Naive thymus-derived CD8-positive, alpha-beta T cell (primary cell): ENCODE measurements at regions of chr10 and their contacts with region 1.

Region 1: DNA sequence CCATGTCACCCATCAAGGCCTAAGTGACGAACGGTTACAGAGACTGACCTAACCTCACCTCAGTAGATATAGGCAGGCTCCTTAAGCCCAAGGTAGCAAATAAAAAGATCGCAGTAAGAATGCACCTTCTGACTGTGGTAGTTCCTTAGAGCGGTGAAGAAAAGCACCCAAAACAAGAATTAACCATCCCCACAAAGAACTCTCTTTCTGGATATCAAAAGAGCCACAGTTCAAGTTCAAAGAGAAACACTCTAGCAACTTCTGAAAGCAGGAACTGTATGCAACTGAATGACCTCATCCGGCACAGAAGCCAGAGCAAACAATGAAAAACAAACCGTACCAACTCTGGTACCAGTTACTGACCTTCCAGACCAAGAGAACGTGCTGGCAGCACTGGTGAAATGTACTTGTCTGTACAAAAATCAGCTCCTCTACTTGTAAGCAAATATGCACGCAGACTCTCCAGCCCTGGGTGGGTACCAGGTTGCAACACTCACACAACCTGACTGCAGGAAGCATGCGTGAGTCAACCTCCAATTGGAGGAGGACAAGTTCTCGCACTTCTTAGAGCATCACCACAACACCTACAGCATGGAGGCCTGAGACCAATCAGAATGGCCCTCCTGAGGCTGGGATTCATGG is 202.7 kb downstream of the FAM107B start:
- DNase-seq: peak; percentile 26 to 93 (median 81)
- ATAC-seq: peak; percentile 67 to 76
- H3K4me3 Mint-ChIP-seq: peak overlapping the region; percentile 90 to 98 (median 96)
- H3K27ac Mint-ChIP-seq: peak overlapping the region; percentile 92 to 99 (median 99)
- H3K4me1 Mint-ChIP-seq: peaks cover 34 to 92% (median 80%) of the 10 kb centered on the region in 4 donors
- H3K27me3 Mint-ChIP-seq: no peaks in the 10 kb centered on the region

Region 2: DNA sequence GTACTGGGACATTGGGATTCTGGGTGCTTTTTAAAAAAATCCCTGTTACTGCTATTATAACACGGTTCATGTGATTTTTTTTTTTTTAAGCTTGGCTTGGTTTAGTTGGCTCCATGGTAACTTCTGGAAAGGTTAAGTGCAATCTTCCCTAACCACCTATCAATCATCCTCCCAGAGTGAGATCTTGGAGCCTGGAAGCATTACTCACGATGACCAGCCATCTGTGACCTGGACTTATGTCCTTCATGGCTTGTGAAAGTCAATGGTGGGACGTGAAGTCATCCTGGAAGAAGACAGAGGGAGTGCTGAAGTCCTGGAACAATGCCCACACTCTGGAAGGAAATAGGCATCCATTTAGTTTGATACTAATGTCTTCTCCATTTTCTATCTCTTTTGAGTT is 105.7 kb before region 1 on chr10:
- POLR2A ChIA-PET with region 1: no interaction called
- DNase-seq: no peak
- ATAC-seq: no peak
- H3K4me3 Mint-ChIP-seq: no peak overlapping the region
- H3K27ac Mint-ChIP-seq: no peak overlapping the region
- H3K4me1 Mint-ChIP-seq: no peaks in the 10 kb centered on the region
- H3K27me3 Mint-ChIP-seq: peaks cover 5 to 33% (median 22%) of the 10 kb centered on the region in 5 donors

Region 3: DNA sequence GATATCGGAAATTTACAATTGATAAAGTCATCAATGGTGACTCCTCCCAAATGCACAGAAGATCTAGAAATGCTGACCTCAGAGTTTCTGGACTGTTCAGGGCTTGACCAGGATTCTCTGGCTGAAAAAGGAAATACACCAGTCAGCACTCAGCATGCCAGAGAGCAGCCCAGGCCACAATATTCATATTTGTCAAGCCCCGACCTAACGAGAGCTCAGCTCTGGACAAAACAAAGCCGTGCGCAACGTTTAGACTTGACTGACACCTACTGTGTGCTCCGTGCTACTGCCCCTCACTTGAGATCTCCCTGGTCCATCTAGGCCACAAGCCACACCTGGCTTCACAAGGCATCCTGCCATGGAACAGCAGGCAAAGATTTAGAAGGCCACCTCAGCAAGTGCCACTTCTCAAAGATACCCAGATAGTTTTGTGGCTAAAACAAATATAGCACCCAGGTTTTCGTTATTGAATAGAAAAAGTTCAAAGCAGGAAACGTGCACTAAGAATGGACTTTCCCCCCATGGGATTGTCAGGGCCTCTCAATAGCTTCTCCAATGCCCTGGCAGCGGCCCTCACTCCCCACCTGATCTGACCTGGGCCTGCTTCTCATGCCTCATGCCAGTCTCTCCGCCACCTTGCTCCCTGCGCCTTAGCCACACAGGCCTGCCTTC is 15.6 kb before region 1 on chr10:
- POLR2A ChIA-PET with region 1: interaction called, 59 read pairs
- DNase-seq: no peak
- ATAC-seq: peak in 1 of 2 donors; percentile 3
- H3K4me3 Mint-ChIP-seq: peak overlapping the region; percentile 19 to 89 (median 74)
- H3K27ac Mint-ChIP-seq: peak overlapping the region; percentile 89 to 97 (median 92)
- H3K4me1 Mint-ChIP-seq: peaks cover 71 to 99% (median 95%) of the 10 kb centered on the region in 4 donors
- H3K27me3 Mint-ChIP-seq: no peaks in the 10 kb centered on the region

Region 4: GRCh38 chr10:14588084-14588937 is 16.3 kb after region 1 on chr10:
- POLR2A ChIA-PET with region 1: interaction called, 314 read pairs
- DNase-seq: peak in 3 of 10 donors; percentile 44 to 49 (median 47)
- ATAC-seq: peak; percentile 2 to 26
- H3K4me3 Mint-ChIP-seq: peak overlapping the region; percentile 72 to 90 (median 84)
- H3K27ac Mint-ChIP-seq: peak overlapping the region; percentile 90 to 100 (median 98)
- H3K4me1 Mint-ChIP-seq: peaks cover 39 to 94% (median 87%) of the 10 kb centered on the region in 4 donors
- H3K27me3 Mint-ChIP-seq: no peaks in the 10 kb centered on the region

Region 5: DNA sequence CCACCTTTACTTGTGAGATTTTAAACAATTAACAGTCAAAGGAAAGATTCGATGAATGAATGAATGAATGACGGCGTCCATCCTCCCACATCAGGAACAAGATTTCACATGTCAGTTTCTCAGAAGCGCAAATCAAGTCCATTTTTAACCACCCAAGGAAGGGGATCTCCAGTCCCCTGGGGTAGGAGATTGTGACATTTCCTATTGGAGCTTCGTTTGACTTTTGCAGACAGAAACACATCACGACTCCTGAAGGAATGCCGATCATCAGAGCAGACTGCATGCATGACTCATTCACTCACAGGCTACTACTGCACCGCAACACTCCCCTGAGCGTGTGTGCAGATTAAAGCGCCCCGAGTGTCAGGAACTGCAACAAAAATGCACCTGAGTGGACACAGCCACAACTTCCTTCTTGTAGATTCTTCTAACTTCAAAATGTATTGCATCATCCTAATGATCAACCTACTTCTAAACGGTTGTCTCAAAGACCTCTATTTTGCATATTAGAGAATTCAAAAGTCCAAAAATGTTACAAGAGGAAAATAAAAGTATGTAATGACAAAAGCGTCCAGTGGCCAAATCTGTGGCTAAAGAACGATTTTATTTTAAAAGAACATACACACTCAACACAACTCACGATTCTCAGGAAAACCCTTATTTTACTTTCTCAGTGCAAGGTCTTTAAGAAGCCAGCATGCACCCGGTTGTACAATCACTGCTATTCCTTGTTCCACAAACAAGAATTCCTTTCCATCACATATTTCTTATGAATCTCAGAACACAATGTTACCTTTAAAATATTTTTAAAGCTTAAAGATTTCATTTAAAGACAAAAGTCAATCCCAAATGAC is 30.1 kb after region 1 on chr10:
- POLR2A ChIA-PET with region 1: interaction called, 15 read pairs
- DNase-seq: peak in 7 of 10 donors; percentile 41 to 79 (median 48)
- ATAC-seq: peak; percentile 14 to 25
- H3K4me3 Mint-ChIP-seq: peak overlapping the region; percentile 80 to 100 (median 98)
- H3K27ac Mint-ChIP-seq: peak overlapping the region; percentile 80 to 98 (median 92)
- H3K4me1 Mint-ChIP-seq: peaks cover 41 to 87% (median 72%) of the 10 kb centered on the region in 4 donors
- H3K27me3 Mint-ChIP-seq: no peaks in the 10 kb centered on the region

Region 6: GRCh38 chr10:14617852-14618251 is 45.9 kb after region 1 on chr10:
- POLR2A ChIA-PET with region 1: no interaction called
- DNase-seq: no peak
- ATAC-seq: no peak
- H3K4me3 Mint-ChIP-seq: no peak overlapping the region
- H3K27ac Mint-ChIP-seq: peak overlapping the region in 4 of 10 donors; percentile 9 to 50 (median 12)
- H3K4me1 Mint-ChIP-seq: peaks cover 16 to 38% (median 24%) of the 10 kb centered on the region in 4 donors
- H3K27me3 Mint-ChIP-seq: no peaks in the 10 kb centered on the region

Region 7: GRCh38 chr10:14782691-14783363 is 210.8 kb after region 1 on chr10:
- POLR2A ChIA-PET with region 1: no interaction called
- DNase-seq: no peak
- ATAC-seq: peak; percentile 37 to 39
- H3K4me3 Mint-ChIP-seq: peak overlapping the region in 1 of 10 donors; percentile 23
- H3K27ac Mint-ChIP-seq: peak overlapping the region in 6 of 10 donors; percentile 22 to 88 (median 70)
- H3K4me1 Mint-ChIP-seq: peaks cover 3 to 20% (median 12%) of the 10 kb centered on the region in 4 donors
- H3K27me3 Mint-ChIP-seq: no peaks in the 10 kb centered on the region